GM10248 (cell line): ENCODE measurements at regions of chr2 and their contacts with region 1.

Region 1: DNA sequence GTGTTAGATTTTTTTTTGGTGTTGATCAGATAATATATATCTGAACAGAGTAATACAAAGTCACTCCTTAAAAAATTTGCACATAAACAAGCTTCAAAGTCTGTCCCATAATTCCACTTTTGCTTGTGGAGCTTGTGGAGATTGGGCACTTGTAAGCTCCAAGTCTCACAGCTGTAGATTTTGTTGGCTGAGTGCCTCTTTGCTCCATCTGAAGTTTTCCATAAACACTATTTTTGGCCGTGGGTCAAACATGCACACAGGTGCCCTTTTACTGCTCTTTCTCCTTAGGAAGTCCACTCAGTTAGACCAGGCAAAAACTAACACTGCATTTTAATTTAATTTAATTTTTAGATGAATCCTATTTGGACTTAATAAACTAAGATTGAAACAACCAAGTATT is 3.6 kb upstream of the KCNJ13 start:
- DNase-seq: no peak
- CTCF ChIP-seq: no peak

Region 2: GRCh38 chr2:232793271-232793670 is 13.3 kb after region 1 on chr2:
- CTCF ChIA-PET with region 1: interaction called, 15 read pairs
- POLR2A ChIA-PET with region 1: no interaction called
- DNase-seq: no peak
- CTCF ChIP-seq: no peak